Aorta (tissue), 5 donors: ENCODE measurements at regions of chr19 and their contacts with region 1.

Region 1: GRCh38 chr19:35269421-35270117 is 807 bp downstream of the USF2 start:
- DNase-seq: peak; percentile 91 to 93
- ATAC-seq: peak; percentile 63
- H3K4me3 ChIP-seq: peak overlapping the region; percentile 91 to 92
- H3K27ac ChIP-seq: peak overlapping the region; percentile 63 to 75
- H3K4me1 ChIP-seq: no peaks in the 10 kb centered on the region
- H3K27me3 ChIP-seq: no peaks in the 10 kb centered on the region

Region 2: DNA sequence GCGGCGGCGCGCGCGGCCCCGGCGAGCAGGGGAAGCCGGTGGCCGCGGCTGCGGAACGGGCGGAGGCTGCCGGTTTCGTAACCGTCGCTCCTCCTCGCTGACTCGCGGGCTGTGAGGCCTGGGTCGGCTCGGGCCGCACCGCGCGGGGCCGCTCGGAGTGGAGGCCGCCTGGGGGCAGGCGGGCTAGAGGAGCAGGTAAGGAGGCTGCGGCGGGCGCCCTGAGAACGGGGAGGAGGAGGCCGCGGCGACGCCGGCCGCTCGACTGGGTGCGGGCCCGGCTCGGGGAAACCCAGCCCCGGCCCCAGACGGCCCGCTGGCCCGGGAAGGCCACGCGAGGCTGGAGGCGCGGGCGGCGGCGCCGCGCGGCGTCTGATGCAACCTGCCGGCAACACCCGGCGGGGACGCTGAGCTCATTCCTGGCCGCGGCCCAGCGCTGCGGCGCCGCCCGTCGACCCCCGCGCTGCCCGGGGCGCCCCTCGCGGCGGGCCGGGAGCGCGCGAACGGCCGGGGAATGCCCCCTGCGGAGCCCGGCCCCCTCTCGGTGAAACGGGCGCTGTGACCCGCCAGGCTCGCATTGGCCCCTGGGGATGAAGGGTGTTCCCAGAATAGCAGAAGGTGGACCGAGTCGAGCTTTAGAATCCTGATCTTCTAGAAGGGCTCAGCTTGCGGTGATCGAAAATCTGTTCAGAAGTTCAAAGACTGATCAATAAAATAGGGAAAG is 1895.7 kb before region 1 on chr19 and contains the start of gene CEBPG:
- intact Hi-C with region 1: loop called in 1 of 2 experiments (anchors 10 kb)
- DNase-seq: peak; percentile 65 to 87
- ATAC-seq: peak; percentile 29
- H3K4me3 ChIP-seq: peak within 1 kb of the TSS; percentile 65 to 87
- H3K27ac ChIP-seq: peak within 1 kb of the TSS; percentile 62 to 83
- H3K4me1 ChIP-seq: peaks cover 0 to 7% of the 10 kb centered on the region in 2 donors
- H3K27me3 ChIP-seq: no peaks in the 10 kb centered on the region
- total RNA-seq, gene CEBPG: 21.8 to 30.5 TPM

Region 3: DNA sequence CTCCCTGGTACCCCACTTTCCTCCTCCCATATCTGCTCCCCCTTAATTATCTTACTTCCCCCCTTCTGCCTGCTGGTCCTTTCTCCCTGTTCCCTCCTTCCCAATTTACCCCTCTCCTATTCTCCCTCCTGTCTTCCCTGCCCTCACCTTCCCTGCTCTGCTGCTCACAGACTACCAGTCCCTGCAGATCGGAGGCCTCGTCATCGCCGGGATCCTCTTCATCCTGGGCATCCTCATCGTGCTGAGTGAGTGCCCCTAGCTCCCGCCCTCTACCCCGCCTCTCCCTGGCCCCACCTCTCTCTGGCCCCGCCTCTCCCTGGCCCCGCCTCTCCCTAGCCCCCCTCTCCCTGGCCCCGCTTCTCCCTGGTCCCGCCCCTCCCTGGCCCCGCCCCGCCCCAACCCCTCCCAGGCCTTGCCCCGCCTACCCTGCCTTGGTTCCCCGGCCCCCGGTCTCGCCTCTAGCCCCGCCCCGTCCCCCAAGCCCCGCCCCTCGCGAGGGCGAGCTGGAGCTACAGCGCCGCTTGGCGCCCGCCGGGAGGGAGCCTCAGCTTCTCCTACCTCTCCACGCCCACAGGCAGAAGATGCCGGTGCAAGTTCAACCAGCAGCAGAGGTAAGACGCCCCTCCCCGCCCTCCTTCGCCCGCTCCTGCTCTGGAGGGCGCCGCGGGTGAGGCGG is 128.5 kb before region 1 on chr19:
- intact Hi-C with region 1: loop called in 1 of 2 experiments (anchors 10 kb)
- DNase-seq: peak; percentile 96 to 99
- ATAC-seq: peak; percentile 87
- H3K4me3 ChIP-seq: no peak overlapping the region
- H3K27ac ChIP-seq: peak overlapping the region in 1 of 2 donors; percentile 26
- H3K4me1 ChIP-seq: peaks cover 0 to 4% of the 10 kb centered on the region in 2 donors
- H3K27me3 ChIP-seq: no peaks in the 10 kb centered on the region

Region 4: DNA sequence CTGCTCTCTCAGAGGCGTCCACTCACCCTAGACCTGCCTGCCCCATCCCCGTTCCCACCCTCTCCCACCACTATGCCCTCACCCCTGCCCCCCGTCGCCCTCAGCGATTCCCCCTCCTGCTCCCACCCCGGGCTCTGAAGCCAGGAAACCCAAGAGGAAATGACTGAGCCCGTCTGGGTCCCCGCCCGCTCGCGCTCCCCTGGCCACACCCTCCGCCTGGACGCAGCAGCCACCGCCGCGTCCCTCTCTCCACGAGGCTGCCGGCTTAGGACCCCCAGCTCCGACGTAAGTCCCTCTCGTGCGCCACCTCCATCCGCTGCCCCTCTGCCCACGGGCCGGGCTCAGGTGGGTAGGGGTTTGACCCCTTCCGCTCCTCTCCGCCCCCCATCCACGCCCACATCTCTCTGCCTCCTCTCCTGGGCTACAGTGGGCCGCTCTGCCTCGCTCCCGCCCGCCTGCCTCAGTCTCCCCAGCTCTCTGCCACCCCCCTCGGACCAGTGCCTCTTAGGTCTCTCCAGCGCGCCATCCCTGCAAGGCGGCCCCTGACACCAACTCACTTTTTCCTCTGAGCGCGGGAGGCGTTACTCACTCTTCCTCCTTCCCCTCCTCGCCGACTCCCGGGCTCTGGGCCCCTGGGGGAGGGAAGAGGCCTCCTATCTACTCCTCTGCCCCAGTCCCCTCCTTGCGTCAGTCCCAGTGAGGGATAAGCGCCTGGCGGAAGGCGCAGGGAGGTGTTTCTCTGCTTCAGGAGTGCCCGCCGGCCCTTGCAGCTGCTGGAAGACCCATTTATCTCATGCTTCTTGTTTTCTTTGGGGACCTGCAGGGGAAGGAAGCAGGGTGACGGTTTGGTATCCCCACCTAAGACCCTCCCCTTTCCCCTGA is 114.8 kb before region 1 on chr19 and contains the start of gene FXYD5:
- intact Hi-C with region 1: loop called (anchors 5 to 10 kb)
- DNase-seq: peak; percentile 85 to 91
- ATAC-seq: peak; percentile 80
- H3K4me3 ChIP-seq: peak within 1 kb of the TSS; percentile 47 to 54
- H3K27ac ChIP-seq: peak within 1 kb of the TSS in 1 of 2 donors; percentile 32
- H3K4me1 ChIP-seq: no peaks in the 10 kb centered on the region
- H3K27me3 ChIP-seq: no peaks in the 10 kb centered on the region
- total RNA-seq, gene FXYD5: 71.7 to 126 TPM

Region 5: GRCh38 chr19:35495107-35496064 is 225.8 kb after region 1 on chr19:
- intact Hi-C with region 1: loop called in 1 of 2 experiments (anchors 10 kb)
- DNase-seq: peak; percentile 72 to 88
- ATAC-seq: peak; percentile 91
- H3K4me3 ChIP-seq: no peak overlapping the region
- H3K27ac ChIP-seq: no peak overlapping the region
- H3K4me1 ChIP-seq: no peaks in the 10 kb centered on the region
- H3K27me3 ChIP-seq: no peaks in the 10 kb centered on the region